ENCODE measurements at regions of chr9 and their contacts with region 1.

Region 1: DNA sequence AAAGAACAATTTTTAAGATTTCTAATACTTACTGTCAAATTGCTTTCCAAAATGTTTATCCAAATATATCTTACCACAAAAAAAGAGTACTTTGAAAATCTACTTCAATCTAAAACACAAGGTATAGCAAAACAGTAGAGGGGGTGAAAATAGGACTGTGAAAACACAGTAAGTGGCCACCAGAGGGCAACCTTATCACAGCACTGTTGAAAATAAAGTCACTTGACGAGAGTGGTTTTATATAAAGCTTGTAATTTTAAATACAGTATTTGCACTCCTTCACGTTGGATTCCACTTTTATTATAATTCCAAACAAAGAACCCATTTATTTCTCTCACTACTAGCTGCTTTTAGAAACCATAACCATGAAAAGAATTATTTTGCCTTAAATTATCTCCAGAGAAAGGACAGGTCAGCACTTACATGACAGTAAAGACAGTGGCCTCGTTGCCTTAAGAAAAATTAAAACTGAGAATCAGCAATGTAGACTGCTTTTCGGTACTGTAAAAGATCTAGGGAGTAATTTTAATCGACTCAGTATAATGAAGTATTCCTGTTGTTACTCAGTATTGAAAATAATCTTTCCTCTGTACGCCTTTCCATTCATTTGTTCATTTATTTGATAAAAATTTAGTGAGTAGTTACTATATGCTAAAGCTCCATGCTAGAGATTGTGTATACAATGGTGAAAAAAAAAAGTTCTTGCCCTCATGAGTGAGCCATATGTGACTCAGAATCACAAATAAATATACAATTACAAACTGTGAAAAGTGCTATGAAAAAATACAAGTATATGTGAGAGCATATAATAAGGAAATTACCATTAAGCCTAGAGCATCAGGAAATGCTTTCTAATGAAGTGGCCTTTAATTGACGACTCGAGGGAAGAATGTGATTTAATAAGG is 40.0 kb upstream of the CDK5RAP2 start:
- DNase-seq: peak; percentile 50
- H3K4me3 ChIP-seq: no peak overlapping the region
- H3K4me3 Mint-ChIP-seq: no peak overlapping the region
- H3K27ac Mint-ChIP-seq: no peak overlapping the region
- H3K4me1 ChIP-seq: 0 out of 2 replicates have a peak, but pooled peaks cover 6% of the 10 kb centered on the region
- H3K4me1 Mint-ChIP-seq: peaks cover 22% of the 10 kb centered on the region
- H3K27me3 ChIP-seq: no peaks in the 10 kb centered on the region
- H3K27me3 Mint-ChIP-seq: no peaks in the 10 kb centered on the region
- CTCF ChIP-seq: peak; percentile 80 to 85

Region 2: GRCh38 chr9:120477521-120478001 is 142.4 kb before region 1 on chr9:
- CTCF ChIA-PET with region 1: no interaction called
- POLR2A ChIA-PET with region 1: no interaction called
- intact Hi-C with region 1: no loop called
- DNase-seq: peak; percentile 43 to 63
- H3K4me3 ChIP-seq: no peak overlapping the region
- H3K4me3 Mint-ChIP-seq: no peak overlapping the region
- H3K27ac Mint-ChIP-seq: no peak overlapping the region
- H3K4me1 ChIP-seq: no peaks in the 10 kb centered on the region
- H3K4me1 Mint-ChIP-seq: no peaks in the 10 kb centered on the region
- H3K27me3 ChIP-seq: no peaks in the 10 kb centered on the region
- H3K27me3 Mint-ChIP-seq: no peaks in the 10 kb centered on the region
- CTCF ChIP-seq: peak; percentile 62 to 80

Region 3: DNA sequence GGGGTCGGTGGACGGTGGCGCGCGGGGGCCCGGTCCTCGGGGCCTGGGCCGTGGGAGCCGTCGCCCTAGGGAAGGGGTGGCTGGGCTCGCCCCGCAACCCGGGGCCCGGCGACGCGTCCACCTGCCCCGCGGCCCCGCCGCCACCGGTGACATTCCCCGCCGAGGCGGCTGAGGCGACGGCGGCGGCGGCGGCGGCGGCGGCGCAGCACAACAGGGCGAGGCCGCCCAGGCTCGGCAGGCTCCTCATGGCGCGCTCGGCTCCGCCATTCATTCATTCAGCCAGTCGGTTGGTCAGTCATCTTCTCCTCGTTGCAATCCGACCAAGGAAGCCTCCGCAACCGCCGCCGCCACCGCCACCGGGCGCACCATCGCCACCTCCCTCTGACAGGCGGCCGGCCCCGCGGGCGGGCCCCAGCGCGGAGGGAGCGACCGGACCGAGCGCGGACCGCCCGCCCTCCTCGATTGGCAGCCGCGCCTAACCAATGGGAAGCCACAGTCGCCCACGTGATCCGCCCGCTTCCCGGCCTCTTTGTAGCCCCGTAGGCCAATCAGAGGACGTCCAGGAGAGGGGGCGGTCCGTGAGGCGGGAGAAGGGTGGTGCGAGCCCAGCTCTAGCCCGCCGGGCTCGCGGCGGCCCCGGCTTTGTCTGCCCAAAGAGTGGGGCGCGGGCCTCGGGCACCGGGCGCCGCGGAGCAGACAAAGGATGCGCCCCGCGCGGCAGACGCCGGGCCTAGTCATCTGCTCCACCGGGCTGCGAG is 94.3 kb after region 1 on chr9 and contains the start of gene MEGF9:
- CTCF ChIA-PET with region 1: interaction called, 4 read pairs
- POLR2A ChIA-PET with region 1: no interaction called
- intact Hi-C with region 1: loop called (anchors 2 kb)
- DNase-seq: peak; percentile 97 to 98
- H3K4me3 ChIP-seq: peak within 1 kb of the TSS; percentile 67
- H3K4me3 Mint-ChIP-seq: peak within 1 kb of the TSS; percentile 85
- H3K27ac Mint-ChIP-seq: peak within 1 kb of the TSS; percentile 61
- H3K4me1 ChIP-seq: peaks cover 19% of the 10 kb centered on the region
- H3K4me1 Mint-ChIP-seq: no peaks in the 10 kb centered on the region
- H3K27me3 ChIP-seq: no peaks in the 10 kb centered on the region
- H3K27me3 Mint-ChIP-seq: no peaks in the 10 kb centered on the region
- CTCF ChIP-seq: no peak
- total RNA-seq, gene MEGF9: 2.8 and 2.9 TPM in 2 replicates

Region 4: DNA sequence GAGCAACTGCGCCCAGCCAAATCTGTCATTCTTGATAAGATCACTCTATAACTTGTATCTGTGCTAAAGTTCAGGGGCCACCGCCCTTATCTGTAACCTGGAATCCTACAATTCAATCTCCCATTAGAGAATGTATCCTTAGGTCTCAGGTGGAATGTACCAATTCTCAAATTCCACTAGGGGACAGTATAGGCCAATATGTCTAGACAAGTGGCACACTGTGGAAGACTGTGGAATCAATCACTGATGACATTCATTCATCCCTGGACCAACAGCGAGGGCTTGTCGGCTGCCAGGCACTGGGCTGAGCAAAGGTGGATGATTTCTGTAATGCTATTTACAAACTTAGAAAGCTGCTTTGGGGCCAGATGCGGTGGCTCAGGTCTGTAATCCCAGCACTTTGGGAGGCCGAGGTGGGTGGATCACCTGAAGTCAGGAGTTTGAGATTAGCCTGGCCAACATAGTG is 123.0 kb after region 1 on chr9:
- CTCF ChIA-PET with region 1: no interaction called
- POLR2A ChIA-PET with region 1: no interaction called
- intact Hi-C with region 1: loop called (anchors 1 kb)
- DNase-seq: peak in 1 of 2 experiments; percentile 50
- H3K4me3 ChIP-seq: no peak overlapping the region
- H3K4me3 Mint-ChIP-seq: no peak overlapping the region
- H3K27ac Mint-ChIP-seq: no peak overlapping the region
- H3K4me1 ChIP-seq: no peaks in the 10 kb centered on the region
- H3K4me1 Mint-ChIP-seq: no peaks in the 10 kb centered on the region
- H3K27me3 ChIP-seq: no peaks in the 10 kb centered on the region
- H3K27me3 Mint-ChIP-seq: no peaks in the 10 kb centered on the region
- CTCF ChIP-seq: peak; percentile 67 to 78

Region 5: GRCh38 chr9:120985810-120986222 is 365.8 kb after region 1 on chr9:
- CTCF ChIA-PET with region 1: no interaction called
- POLR2A ChIA-PET with region 1: no interaction called
- intact Hi-C with region 1: loop called (anchors 5 kb)
- DNase-seq: peak in 1 of 2 experiments; percentile 55
- H3K4me3 ChIP-seq: no peak overlapping the region
- H3K4me3 Mint-ChIP-seq: no peak overlapping the region
- H3K27ac Mint-ChIP-seq: no peak overlapping the region
- H3K4me1 ChIP-seq: no peaks in the 10 kb centered on the region; the same call in 1 of the 2 replicates
- H3K4me1 Mint-ChIP-seq: peaks cover 19% of the 10 kb centered on the region
- H3K27me3 ChIP-seq: no peaks in the 10 kb centered on the region
- H3K27me3 Mint-ChIP-seq: no peaks in the 10 kb centered on the region
- CTCF ChIP-seq: peak; percentile 59 to 62